ENCODE measurements at regions of chr3 and their contacts with region 1.

Region 1: GRCh38 chr3:108818404-108818803 is 4.2 kb upstream of the TRAT1 start:
- DNase-seq: peak; percentile 74 to 82 (median 77)
- H3K4me3 ChIP-seq: no peak overlapping the region
- H3K4me3 Mint-ChIP-seq: peak overlapping the region in 6 of 8 donors; percentile 15 to 60 (median 34)
- H3K27ac ChIP-seq: no peak overlapping the region
- H3K27ac Mint-ChIP-seq: peak overlapping the region; percentile 23 to 78 (median 73)
- H3K4me1 ChIP-seq: peaks cover 37% of the 10 kb centered on the region
- H3K4me1 Mint-ChIP-seq: peaks cover 23 to 42% (median 27%) of the 10 kb centered on the region in 4 donors
- H3K27me3 ChIP-seq: no peaks in the 10 kb centered on the region
- H3K27me3 Mint-ChIP-seq: no peaks in the 10 kb centered on the region

Region 2: GRCh38 chr3:108221911-108222852 is 596.2 kb before region 1 on chr3 and contains the start of gene IFT57:
- CTCF ChIA-PET with region 1: no interaction called
- POLR2A ChIA-PET with region 1: no interaction called
- intact Hi-C with region 1: loop called (anchors 1 kb)
- DNase-seq: peak; percentile 96 to 97 (median 97)
- H3K4me3 ChIP-seq: peak within 1 kb of the TSS; percentile 66 to 91
- H3K4me3 Mint-ChIP-seq: peak within 1 kb of the TSS; percentile 95 to 99 (median 98)
- H3K27ac ChIP-seq: peak within 1 kb of the TSS; percentile 95
- H3K27ac Mint-ChIP-seq: peak within 1 kb of the TSS; percentile 100
- H3K4me1 ChIP-seq: peaks cover 49% of the 10 kb centered on the region
- H3K4me1 Mint-ChIP-seq: peaks cover 37 to 57% (median 47%) of the 10 kb centered on the region in 4 donors
- H3K27me3 ChIP-seq: no peaks in the 10 kb centered on the region
- H3K27me3 Mint-ChIP-seq: peaks cover 0 to 1% of the 10 kb centered on the region in 2 donors
- total RNA-seq, gene IFT57: 24.1 to 26.1 TPM

Region 3: DNA sequence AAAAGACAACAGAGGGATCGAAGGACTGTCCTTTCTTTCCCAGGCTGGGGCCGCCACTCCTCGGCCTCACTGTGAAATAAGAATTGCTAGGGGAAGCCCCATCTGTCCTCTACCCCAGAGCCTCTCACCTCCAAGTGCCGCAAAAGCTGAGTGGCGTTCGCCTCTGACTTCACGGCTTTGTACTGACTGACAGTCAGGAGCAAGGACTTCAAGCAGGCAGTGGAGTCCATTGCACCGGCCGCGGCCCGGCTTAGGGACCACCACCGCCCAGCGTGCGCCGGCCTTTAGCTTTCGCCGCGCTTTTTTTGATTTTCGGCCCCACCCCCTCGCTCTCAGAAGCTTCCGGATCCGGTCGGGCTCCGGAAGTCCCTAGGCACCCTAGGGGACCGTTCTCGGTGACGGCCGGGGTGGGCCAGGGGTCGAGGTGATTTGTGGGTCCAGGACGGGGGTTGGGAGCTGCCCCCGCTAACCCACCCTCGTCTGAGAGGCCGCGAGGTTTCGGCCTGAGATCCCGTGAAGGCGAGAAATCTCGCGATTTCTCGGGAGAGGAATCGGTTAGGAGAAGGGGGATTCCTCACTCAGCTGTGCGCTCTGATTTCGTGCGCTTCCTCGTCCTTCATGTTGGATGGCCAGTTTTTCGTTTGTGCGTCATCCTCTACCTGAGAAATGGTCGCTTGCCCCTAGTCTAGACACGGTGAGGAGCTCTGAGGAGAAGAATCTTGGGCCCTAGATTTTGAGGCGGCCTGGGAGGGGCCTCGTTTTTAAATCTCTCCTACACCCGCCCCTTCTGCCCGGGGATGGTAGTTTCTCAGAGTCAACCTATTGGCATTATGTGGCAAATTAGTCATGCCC is 229.0 kb before region 1 on chr3 and contains the starts of genes CIP2A and DZIP3:
- CTCF ChIA-PET with region 1: interaction called, 21 read pairs
- POLR2A ChIA-PET with region 1: interaction called, 15 read pairs
- intact Hi-C with region 1: loop called (anchors 2 kb)
- DNase-seq: peak; percentile 85 to 93 (median 89)
- H3K4me3 ChIP-seq: peak within 1 kb of the TSS; percentile 80 to 98
- H3K4me3 Mint-ChIP-seq: peak within 1 kb of the TSS; percentile 92 to 98 (median 97)
- H3K27ac ChIP-seq: peak within 1 kb of the TSS; percentile 92
- H3K27ac Mint-ChIP-seq: peak within 1 kb of the TSS; percentile 97 to 100 (median 99)
- H3K4me1 ChIP-seq: peaks cover 28% of the 10 kb centered on the region
- H3K4me1 Mint-ChIP-seq: peaks cover 15 to 38% (median 25%) of the 10 kb centered on the region in 4 donors
- H3K27me3 ChIP-seq: no peaks in the 10 kb centered on the region
- H3K27me3 Mint-ChIP-seq: no peaks in the 10 kb centered on the region
- total RNA-seq, gene CIP2A: 3.4 to 3.9 TPM
- total RNA-seq, gene DZIP3: 15.3 to 18.5 TPM

Region 4: DNA sequence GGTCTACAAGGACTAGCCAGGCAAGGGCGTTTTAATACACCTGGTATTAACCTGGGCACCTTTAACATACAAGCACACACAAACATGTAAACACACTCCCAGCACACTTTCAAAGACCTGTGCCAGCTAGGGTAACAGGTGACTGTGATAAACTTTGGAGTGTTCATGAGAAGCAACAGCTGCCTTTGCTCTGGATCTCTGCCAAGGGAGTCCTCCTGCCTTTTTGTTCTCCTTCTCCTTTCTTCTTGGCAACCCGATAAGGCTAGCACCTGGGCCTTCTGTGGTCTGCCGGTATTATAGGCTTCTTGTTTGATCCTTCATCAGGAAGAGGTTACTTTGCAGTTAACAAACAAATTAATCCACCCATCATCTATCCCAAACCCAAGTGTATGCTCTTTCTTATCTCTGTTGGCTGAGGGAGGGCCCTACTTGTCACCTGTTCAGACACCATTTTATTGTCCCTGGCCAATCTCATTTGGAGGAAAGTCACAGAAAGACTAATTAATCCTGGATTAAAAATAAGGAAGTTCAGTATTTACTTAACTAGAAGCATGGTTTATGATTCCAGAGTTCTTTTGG is 60.9 kb before region 1 on chr3 and contains the start of gene RETNLB:
- CTCF ChIA-PET with region 1: interaction called, 25 read pairs
- POLR2A ChIA-PET with region 1: no interaction called
- intact Hi-C with region 1: no loop called
- DNase-seq: no peak
- H3K4me3 ChIP-seq: no peak within 1 kb of the TSS
- H3K4me3 Mint-ChIP-seq: no peak within 1 kb of the TSS
- H3K27ac ChIP-seq: no peak within 1 kb of the TSS
- H3K27ac Mint-ChIP-seq: peak within 1 kb of the TSS in 1 of 7 donors; percentile 41
- H3K4me1 ChIP-seq: no peaks in the 10 kb centered on the region
- H3K4me1 Mint-ChIP-seq: peaks cover 0 to 8% (median 4%) of the 10 kb centered on the region in 4 donors
- H3K27me3 ChIP-seq: no peaks in the 10 kb centered on the region
- H3K27me3 Mint-ChIP-seq: peaks cover 0 to 2% of the 10 kb centered on the region in 2 donors
- total RNA-seq, gene RETNLB: not detected

Region 5: DNA sequence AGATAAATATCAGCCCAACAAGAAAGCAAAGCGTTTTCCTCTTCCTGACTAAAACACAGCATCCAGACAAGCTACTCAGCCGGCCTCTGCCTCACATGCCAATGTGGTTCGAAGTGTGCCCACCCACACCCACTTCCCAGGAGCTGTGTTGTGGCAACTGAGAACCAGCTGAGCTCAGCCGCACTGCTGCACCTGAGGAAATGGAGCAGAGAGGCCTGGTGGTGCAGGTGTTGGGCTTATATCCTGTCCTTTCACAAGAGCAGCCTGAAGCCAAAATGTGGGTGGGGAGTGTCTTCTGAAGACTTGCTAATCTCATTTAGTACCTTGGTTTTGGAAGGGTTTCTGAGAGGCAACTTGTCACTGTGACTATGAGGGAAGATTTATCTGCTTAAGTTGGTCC is 38.2 kb before region 1 on chr3:
- CTCF ChIA-PET with region 1: no interaction called
- POLR2A ChIA-PET with region 1: no interaction called
- intact Hi-C with region 1: no loop called
- DNase-seq: peak; percentile 39 to 57 (median 50)
- H3K4me3 ChIP-seq: no peak overlapping the region
- H3K4me3 Mint-ChIP-seq: peak overlapping the region in 5 of 8 donors; percentile 0 to 72 (median 51)
- H3K27ac ChIP-seq: no peak overlapping the region
- H3K27ac Mint-ChIP-seq: peak overlapping the region in 6 of 7 donors; percentile 2 to 75 (median 32)
- H3K4me1 ChIP-seq: peaks cover 26% of the 10 kb centered on the region
- H3K4me1 Mint-ChIP-seq: peaks cover 25 to 37% (median 30%) of the 10 kb centered on the region in 4 donors
- H3K27me3 ChIP-seq: no peaks in the 10 kb centered on the region
- H3K27me3 Mint-ChIP-seq: no peaks in the 10 kb centered on the region

Region 6: GRCh38 chr3:108835101-108835500 is 16.7 kb after region 1 on chr3:
- CTCF ChIA-PET with region 1: interaction called, 59 read pairs
- POLR2A ChIA-PET with region 1: interaction called, 221 read pairs
- intact Hi-C with region 1: loop called (anchors 1 kb)
- DNase-seq: peak; percentile 61 to 85 (median 72)
- H3K4me3 ChIP-seq: peak overlapping the region; percentile 3 to 48
- H3K4me3 Mint-ChIP-seq: peak overlapping the region; percentile 77 to 90 (median 86)
- H3K27ac ChIP-seq: peak overlapping the region; percentile 57
- H3K27ac Mint-ChIP-seq: peak overlapping the region; percentile 68 to 94 (median 89)
- H3K4me1 ChIP-seq: peaks cover 95% of the 10 kb centered on the region
- H3K4me1 Mint-ChIP-seq: peaks cover 71 to 95% (median 79%) of the 10 kb centered on the region in 4 donors
- H3K27me3 ChIP-seq: no peaks in the 10 kb centered on the region
- H3K27me3 Mint-ChIP-seq: no peaks in the 10 kb centered on the region

Measured in CD4-positive, alpha-beta memory T cell (primary cell).